ENCODE measurements at regions of chr6 and their contacts with region 1.

Region 1: GRCh38 chr6:106979427-106979884 is 4.9 kb upstream of the CD24 start:
- DNase-seq: peak; percentile 79 to 85
- H3K4me3 ChIP-seq: no peak overlapping the region
- H3K27ac ChIP-seq: no peak overlapping the region
- H3K4me1 ChIP-seq: peaks cover 0 to 11% (median 8%) of the 10 kb centered on the region in 4 donors
- H3K27me3 ChIP-seq: peaks cover 0 to 79% of the 10 kb centered on the region in 2 donors
- CTCF ChIP-seq: peak; percentile 81 to 90

Region 2: DNA sequence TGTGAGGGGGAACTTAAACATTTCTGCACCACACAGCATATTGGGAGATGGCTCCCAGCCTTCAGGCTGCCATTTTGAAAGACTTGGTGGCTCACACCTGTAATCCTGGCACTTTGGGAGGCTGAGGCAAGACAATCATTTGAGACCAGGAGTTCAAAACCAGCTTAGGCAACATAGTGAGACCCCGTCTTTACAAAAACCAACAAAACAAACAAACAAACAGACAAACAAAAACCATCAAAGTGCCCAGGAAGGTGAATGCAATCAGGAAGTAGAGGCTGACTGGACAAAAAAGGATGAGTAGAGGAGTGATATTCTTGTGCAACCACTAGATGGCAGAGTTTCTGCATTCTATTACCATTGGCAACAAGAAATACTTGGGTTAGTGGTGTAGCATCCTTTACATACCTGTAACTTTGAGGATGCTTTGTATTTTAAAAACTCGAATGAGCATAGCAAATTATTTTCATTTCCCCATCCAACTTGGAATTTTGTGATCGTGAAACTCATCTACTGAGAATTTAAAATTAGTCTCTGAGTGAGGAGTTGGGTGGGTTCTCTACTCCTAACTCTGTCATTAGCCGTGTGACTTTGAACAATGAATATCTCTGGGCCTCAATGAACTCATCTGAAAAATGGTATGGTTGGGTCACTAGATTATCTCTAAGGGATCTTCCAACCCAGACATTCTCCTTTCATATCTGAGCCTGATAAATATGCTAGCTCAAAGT is 534.5 kb before region 1 on chr6:
- intact Hi-C with region 1: loop called (anchors 10 kb)
- DNase-seq: no peak
- H3K4me3 ChIP-seq: no peak overlapping the region
- H3K27ac ChIP-seq: no peak overlapping the region
- H3K4me1 ChIP-seq: peaks cover 0 to 5% (median 0%) of the 10 kb centered on the region in 4 donors
- H3K27me3 ChIP-seq: peaks cover 0 to 23% of the 10 kb centered on the region in 2 donors
- CTCF ChIP-seq: peak; percentile 71 to 72

Region 3: DNA sequence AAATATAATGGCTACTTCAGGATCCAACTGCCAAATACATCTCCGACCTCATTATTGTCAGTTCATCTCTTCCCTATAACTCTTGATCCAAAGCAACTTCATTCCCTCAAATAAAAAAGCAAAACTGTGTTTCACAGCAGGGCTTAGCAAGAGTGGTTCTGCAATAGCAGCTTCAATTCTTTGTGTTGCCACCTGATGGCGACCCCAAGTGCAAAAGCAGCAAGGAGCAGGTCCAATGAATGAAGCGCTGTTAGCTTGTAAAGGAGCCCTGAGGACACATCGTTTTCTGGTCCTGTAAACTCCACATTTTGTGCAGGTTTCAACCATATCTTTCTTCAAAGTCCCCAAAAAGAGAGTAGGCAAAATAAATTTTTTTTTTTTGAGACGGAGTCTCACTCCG is 369.8 kb before region 1 on chr6:
- intact Hi-C with region 1: loop called (anchors 5 kb)
- DNase-seq: no peak
- H3K4me3 ChIP-seq: no peak overlapping the region
- H3K27ac ChIP-seq: no peak overlapping the region
- H3K4me1 ChIP-seq: no peaks in the 10 kb centered on the region
- H3K27me3 ChIP-seq: no peaks in the 10 kb centered on the region
- CTCF ChIP-seq: no peak

Measured in tibial artery (tissue), 4 donors.